B cell (primary cell): ENCODE measurements at regions of chr7 and their contacts with region 1.

Region 1: GRCh38 chr7:2698581-2699288 is 10.7 kb downstream of the AMZ1 start:
- DNase-seq: peak; percentile 60
- ATAC-seq: peak; percentile 89
- H3K4me3 ChIP-seq: peak overlapping the region in 3 of 5 experiments; percentile 20 to 35 (median 34)
- H3K4me3 Mint-ChIP-seq: peak overlapping the region; percentile 77
- H3K27ac ChIP-seq: no peak overlapping the region
- H3K27ac Mint-ChIP-seq: peak overlapping the region; percentile 84
- H3K4me1 ChIP-seq: peaks cover 13 to 18% of the 10 kb centered on the region in 2 donors
- H3K4me1 Mint-ChIP-seq: peaks cover 21% of the 10 kb centered on the region
- H3K27me3 ChIP-seq: peaks cover 0 to 18% (median 0%) of the 10 kb centered on the region in 4 experiments
- H3K27me3 Mint-ChIP-seq: no peaks in the 10 kb centered on the region
- CTCF ChIP-seq: no peak

Region 2: DNA sequence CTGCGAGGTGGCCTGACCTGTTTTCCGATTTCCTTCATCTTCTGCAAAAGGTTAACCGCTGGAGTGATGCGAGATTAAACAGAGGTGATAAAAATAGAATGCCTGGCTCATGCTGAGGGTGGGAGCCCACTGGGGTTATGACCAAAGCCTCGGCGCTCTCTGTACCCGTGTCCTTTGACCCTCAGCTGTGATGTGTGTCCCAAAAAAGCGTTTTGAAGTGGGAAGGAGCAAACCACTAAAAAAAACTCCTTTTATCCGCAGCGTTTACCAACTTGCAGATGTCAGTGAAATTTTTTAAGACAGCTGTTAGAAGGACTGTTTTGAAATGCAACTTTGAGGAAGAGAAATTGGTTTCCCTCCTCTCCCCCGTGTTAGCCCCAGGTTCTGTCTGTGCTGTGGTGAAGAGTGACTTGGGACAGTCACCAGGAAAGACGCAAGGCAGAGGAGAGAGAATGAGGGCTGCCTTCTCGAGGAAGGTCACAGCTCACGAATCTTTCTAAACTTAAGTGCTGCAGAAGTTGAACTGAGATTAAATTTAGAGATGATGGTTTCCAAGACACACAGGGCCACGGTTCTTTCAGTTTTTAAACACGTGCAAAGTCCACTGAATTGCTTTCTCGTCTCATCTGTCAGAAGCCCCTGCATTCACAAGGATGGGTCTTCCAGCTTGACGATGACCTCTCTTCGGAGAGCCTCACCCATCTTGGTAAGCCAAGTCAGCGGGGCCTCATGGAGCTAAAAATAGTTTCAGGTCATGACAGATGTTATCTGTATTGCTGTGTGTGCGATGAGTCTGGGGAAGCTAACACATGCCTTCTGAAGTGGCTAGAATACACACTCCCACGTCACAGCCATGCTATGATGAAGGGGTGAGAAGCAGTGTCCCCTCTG is 16.9 kb after region 1 on chr7:
- CTCF ChIA-PET with region 1: interaction called, 72 read pairs
- POLR2A ChIA-PET with region 1: interaction called, 24 read pairs
- intact Hi-C with region 1: no loop called
- DNase-seq: peak; percentile 54
- ATAC-seq: no peak
- H3K4me3 ChIP-seq: no peak overlapping the region
- H3K4me3 Mint-ChIP-seq: peak overlapping the region; percentile 74
- H3K27ac ChIP-seq: peak overlapping the region; percentile 49 to 58
- H3K27ac Mint-ChIP-seq: peak overlapping the region; percentile 94
- H3K4me1 ChIP-seq: peaks cover 55 to 75% of the 10 kb centered on the region in 2 donors
- H3K4me1 Mint-ChIP-seq: peaks cover 81% of the 10 kb centered on the region
- H3K27me3 ChIP-seq: no peaks in the 10 kb centered on the region
- H3K27me3 Mint-ChIP-seq: no peaks in the 10 kb centered on the region
- CTCF ChIP-seq: no peak